Activated CD8-positive, alpha-beta memory T cell treated with anti-CD3 and anti-CD28 coated beads, Interleukin-2, amount 10 ng/mL, durations not matched to agents 7 days and 5 days (primary cell): ENCODE measurements at regions of chr15 and their contacts with region 1.

Region 1: GRCh38 chr15:84748274-84749110 is at the start of gene ZNF592:
- DNase-seq: peak; percentile 83
- ATAC-seq: peak; percentile 69
- H3K4me3 Mint-ChIP-seq: peak within 1 kb of the TSS; percentile 93
- H3K27ac Mint-ChIP-seq: peak within 1 kb of the TSS; percentile 93
- H3K4me1 Mint-ChIP-seq: peaks cover 55% of the 10 kb centered on the region
- H3K27me3 Mint-ChIP-seq: no peaks in the 10 kb centered on the region
- total RNA-seq, gene ZNF592: 32.9 to 39.7 TPM

Region 2: DNA sequence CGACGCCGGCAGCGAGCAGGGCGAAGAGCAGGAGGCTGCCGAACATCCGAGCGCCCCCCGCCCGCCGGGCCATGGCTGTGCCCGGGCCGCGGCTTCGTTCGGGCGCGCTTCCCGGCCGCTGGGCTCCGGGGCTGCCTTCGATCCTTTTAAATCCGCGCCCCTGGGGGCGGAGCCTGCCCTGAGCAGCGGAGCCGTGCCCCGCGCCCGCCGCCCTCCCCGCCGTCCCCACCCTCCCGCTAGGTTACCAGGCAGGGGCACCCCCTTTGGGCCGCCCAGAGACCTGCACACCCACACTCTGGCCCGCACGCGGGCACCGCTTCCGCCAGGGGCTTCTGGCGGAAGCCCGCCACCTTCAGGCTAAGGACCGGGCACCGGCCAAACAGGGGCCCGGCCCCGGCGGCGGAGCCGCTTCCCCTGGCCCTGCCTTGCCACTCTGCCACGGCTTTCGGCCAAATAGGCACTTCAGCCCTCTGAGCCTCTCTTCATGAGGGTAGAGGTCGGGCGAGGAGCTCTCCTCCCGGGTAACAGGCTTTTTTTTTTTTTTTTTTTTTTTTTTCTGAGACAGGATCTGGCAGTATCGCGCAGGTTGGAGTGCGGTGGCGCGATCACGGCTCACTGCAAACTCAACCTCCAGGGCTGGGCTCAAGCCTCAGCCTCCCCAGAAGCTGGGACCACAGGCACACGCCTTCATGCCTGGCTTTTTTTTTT is 90.3 kb before region 1 on chr15 and contains the start of gene NMB:
- CTCF ChIA-PET with region 1: interaction called, 34 read pairs
- DNase-seq: peak; percentile 86
- ATAC-seq: peak; percentile 68
- H3K4me3 Mint-ChIP-seq: peak within 1 kb of the TSS; percentile 65
- H3K27ac Mint-ChIP-seq: peak within 1 kb of the TSS; percentile 61
- H3K4me1 Mint-ChIP-seq: peaks cover 34% of the 10 kb centered on the region
- H3K27me3 Mint-ChIP-seq: no peaks in the 10 kb centered on the region
- total RNA-seq, gene NMB: 1.5 to 1.8 TPM

Region 3: GRCh38 chr15:84734794-84735479 is 13.6 kb before region 1 on chr15:
- CTCF ChIA-PET with region 1: interaction called, 19 read pairs
- DNase-seq: peak; percentile 89
- ATAC-seq: peak; percentile 74
- H3K4me3 Mint-ChIP-seq: peak overlapping the region; percentile 63
- H3K27ac Mint-ChIP-seq: peak overlapping the region; percentile 98
- H3K4me1 Mint-ChIP-seq: peaks cover 57% of the 10 kb centered on the region
- H3K27me3 Mint-ChIP-seq: no peaks in the 10 kb centered on the region

Region 4: GRCh38 chr15:84773716-84774115 is 25.2 kb after region 1 on chr15:
- CTCF ChIA-PET with region 1: no interaction called
- DNase-seq: no peak
- ATAC-seq: no peak
- H3K4me3 Mint-ChIP-seq: no peak overlapping the region
- H3K27ac Mint-ChIP-seq: no peak overlapping the region
- H3K4me1 Mint-ChIP-seq: peaks cover 7% of the 10 kb centered on the region
- H3K27me3 Mint-ChIP-seq: no peaks in the 10 kb centered on the region

Region 5: GRCh38 chr15:85116925-85117680 is 368.6 kb after region 1 on chr15:
- CTCF ChIA-PET with region 1: no interaction called
- DNase-seq: peak; percentile 29
- ATAC-seq: no peak
- H3K4me3 Mint-ChIP-seq: no peak overlapping the region
- H3K27ac Mint-ChIP-seq: no peak overlapping the region
- H3K4me1 Mint-ChIP-seq: peaks cover 6% of the 10 kb centered on the region
- H3K27me3 Mint-ChIP-seq: no peaks in the 10 kb centered on the region